Right ventricle myocardium inferior (tissue), 1 donor: ENCODE measurements at regions of chr7 and their contacts with region 1.

Region 1: DNA sequence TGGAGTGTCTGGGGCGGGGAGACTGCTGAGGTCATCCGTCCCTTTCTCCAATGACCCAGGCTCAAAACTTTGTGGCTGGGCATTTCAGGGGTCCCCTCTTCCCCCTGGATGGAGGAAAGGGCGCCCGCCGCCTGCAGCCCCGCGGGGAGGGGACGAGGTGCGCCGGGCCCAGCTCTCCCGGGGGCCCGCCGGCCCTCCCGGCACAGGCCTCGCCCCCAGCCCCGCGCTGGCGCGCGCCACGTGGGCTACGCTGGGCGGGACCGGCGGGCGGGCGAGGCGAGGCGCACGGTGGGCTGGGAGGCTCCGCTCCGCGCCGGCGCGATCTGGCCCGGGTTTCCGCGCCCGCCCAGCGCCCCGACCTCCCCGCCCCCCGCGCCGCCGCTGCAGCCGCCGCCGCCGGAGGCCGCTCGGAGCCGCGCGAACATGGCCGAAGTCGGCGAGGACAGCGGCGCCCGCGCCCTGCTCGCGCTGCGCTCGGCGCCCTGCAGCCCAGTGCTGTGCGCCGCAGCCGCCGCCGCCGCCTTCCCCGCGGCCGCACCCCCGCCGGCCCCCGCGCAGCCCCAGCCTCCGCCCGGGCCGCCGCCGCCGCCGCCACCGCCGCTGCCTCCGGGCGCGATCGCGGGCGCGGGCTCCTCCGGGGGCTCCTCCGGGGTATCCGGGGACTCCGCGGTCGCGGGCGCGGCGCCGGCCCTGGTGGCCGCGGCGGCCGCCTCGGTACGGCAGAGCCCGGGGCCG is at the start of gene FOXK1:
- DNase-seq: peak; percentile 90
- ATAC-seq: peak; percentile 89
- total RNA-seq, gene FOXK1: 16.8 TPM

Region 2: GRCh38 chr7:4641667-4642467 is 40.2 kb before region 1 on chr7:
- intact Hi-C with region 1: loop called (anchors 1 kb)
- DNase-seq: peak; percentile 98
- ATAC-seq: peak; percentile 98